Ovary (tissue), 10 donors: ENCODE measurements at regions of chr12 and their contacts with region 1.

Region 1: DNA sequence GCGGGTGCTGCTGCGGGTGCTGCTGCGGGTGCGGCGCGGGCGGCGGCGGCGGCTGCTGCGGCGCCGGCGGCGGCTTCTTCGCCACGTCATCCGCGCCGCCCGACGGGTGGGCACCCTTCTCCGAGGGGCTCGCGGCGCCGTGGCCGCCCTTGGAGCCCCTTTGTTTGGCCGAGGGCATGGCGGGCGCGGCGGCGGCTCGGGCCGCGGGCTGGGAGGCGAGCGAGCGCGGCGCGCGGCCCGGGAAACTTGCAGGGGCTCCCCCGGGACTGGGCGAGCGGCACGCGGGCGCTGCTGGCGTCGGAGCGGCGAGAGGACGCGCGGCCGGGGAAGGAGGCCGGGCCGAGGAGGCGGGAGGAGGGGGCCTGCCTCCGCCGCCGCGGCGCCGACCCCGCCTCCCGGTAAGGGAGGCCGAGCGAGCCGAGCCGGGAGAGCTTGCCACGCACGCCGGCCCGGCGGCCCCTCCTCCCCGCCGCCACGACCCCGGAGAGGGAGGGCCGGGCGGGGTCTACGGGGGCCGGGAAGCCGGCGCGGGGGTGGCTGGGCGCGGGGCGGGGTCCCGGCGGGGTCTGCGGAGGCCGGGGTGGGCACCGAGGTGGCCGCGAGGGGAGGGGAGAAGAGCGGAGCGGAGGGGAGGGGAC is at the start of gene CKAP4:
- DNase-seq: peak; percentile 80 to 88 (median 85)
- H3K4me3 ChIP-seq: peak within 1 kb of the TSS; percentile 73
- H3K27ac ChIP-seq: peak within 1 kb of the TSS; percentile 99 to 100
- H3K4me1 ChIP-seq: peaks cover 16% of the 10 kb centered on the region
- H3K27me3 ChIP-seq: no peaks in the 10 kb centered on the region
- CTCF ChIP-seq: no peak
- EP300 ChIP-seq: no peak
- POLR2A ChIP-seq: peak; percentile 59
- total RNA-seq, gene CKAP4: 32.0 to 59.4 (median 55.4) TPM

Region 2: DNA sequence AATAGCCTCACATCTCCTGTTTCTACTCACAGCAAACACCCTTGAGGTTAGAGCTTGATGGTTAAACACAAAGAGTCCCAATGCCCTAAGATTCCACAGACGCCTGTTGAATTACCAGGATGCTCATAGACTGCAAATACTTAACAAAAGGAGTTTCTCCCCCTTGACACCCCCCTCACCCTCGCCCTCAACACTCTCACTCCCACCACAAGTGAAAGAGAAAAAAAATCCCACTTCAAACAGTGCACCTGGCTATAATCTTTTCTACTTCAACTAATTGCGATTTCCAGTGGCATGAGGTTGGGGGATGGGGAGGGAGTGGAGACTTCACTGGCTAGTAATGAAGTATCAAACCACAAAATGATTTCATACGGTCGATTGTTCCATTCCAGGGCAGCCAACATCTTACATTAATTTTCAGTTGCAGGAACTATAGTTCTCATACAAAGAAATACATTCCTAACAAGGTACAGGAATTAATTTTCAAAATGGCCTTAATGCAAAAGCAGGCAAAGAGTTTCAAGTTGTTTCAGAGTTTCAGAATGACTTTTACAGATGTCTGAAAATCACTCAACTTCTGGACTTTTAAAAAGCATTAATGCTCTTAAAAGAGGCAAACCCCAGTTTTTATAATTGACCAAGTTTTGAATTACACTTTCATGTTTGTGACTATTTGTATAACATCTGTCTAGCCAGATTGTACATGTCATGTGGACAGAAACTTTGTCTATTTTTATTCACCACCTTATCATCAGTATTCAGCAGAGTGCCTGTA is 526.6 kb before region 1 on chr12:
- intact Hi-C with region 1: no loop called
- DNase-seq: no peak
- H3K4me3 ChIP-seq: no peak overlapping the region
- H3K27ac ChIP-seq: no peak overlapping the region
- H3K4me1 ChIP-seq: no peaks in the 10 kb centered on the region
- H3K27me3 ChIP-seq: no peaks in the 10 kb centered on the region
- CTCF ChIP-seq: no peak
- EP300 ChIP-seq: no peak
- POLR2A ChIP-seq: no peak

Region 3: DNA sequence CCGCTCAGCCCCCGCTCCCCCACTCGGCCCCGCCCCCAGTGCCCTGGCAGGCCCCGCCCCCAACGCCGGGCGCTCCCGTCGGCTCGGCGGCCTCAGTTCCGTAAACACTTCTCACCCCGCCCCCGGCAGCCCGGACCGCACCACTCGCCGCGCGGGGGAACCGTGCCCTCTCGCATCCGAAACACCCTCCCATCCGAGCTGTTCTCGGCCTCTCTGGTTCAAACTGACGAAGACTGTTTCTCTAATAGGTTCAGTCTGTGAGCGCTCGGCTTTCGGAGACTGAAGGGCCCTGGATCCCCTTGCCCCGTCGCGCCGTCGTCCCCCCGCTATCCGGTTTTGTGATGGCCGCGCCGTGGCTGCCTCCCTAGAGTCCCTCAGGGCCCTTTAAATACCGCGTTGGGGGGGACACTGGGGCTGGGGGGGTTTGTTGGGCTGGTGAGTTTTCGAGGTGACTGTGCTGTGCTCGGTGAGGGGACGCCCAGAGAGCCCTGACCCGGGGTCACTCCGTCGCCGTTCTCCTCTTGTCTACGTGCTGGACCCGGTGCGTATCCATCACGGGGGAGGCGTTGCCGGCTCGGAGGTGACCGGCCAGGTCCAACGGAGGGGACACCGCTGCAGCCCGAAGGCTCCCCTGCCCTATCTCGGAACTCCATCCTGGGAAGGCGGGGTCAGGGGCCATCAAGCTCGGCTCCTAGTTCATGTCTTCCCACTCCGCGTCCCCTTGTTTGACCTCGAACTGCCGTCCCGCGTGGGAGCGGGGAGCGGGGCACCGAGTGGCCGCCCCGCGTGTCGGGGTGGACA is 54.8 kb after region 1 on chr12 and contains the start of gene TCP11L2:
- intact Hi-C with region 1: loop called in 1 of 4 experiments (anchors 5 kb)
- DNase-seq: peak; percentile 87 to 93 (median 90)
- H3K4me3 ChIP-seq: peak within 1 kb of the TSS; percentile 75
- H3K27ac ChIP-seq: peak within 1 kb of the TSS; percentile 86 to 89
- H3K4me1 ChIP-seq: peaks cover 7% of the 10 kb centered on the region
- H3K27me3 ChIP-seq: no peaks in the 10 kb centered on the region
- CTCF ChIP-seq: peak in 1 of 3 donors; percentile 28
- EP300 ChIP-seq: no peak
- POLR2A ChIP-seq: peak; percentile 55
- total RNA-seq, gene TCP11L2: 8.5 to 41.7 (median 30.3) TPM

Region 4: DNA sequence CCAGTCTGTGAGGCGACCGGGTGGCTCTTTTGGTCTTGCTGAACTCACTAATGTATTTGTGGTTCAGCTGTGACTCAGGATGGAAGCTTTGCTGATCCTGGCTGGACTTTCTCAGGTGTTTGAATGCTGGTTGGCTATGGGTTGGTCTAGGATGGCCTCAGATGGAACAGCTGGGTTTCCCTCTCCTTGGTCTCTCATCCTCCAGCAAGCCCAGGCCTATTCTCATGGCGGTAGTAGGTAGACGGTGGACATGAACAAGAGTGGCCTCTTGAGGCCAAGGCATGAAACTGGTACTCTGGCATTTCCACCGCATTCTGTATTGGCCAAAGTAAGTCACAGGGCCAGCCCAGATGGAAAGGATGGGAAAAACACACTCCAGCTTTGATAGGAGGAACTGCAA is 97.9 kb after region 1 on chr12:
- intact Hi-C with region 1: loop called in 2 of 4 experiments (anchors 5 to 10 kb)
- DNase-seq: no peak
- H3K4me3 ChIP-seq: no peak overlapping the region
- H3K27ac ChIP-seq: no peak overlapping the region
- H3K4me1 ChIP-seq: peaks cover 10% of the 10 kb centered on the region
- H3K27me3 ChIP-seq: no peaks in the 10 kb centered on the region
- CTCF ChIP-seq: no peak
- EP300 ChIP-seq: no peak
- POLR2A ChIP-seq: no peak

Region 5: DNA sequence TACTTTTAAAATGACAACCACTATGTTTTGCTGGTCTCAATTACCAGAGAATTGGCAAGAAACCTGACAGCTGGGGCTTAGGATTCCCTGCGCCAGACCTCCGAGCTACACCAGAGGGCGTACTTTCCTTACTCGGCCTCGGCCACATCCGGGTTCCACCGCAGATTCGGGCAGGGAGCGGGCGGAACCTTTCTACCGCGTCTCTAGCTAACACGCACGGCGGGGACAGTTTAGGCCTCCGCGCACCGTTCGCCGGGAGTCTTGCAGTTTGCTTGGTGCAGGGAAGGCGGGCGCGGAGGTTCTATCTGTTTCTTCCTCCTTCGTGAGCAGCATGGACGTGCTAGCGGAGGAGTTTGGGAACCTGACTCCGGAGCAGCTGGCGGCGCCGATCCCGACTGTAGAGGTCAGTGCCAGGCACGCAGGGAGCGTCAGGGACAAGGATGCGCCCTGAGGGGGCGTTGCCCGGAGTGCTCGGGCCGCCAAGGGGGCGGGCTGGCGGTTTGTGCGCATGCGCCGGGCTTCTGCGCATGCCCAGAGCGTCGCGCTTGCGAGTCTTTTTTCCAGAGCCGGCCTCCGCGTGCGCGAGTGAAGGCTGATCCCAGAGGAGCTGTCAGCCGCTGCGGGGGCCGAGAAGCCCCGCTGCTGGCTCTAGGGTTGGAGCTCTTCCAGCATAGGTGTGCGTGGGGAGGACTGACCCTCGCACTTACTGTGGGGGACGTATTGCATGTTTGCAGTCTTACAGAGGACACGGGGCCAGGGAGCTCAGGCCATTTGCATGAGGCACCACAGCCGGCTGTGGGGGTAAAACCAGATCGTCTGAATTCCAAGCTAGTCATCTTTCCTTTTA is 110.0 kb after region 1 on chr12 and contains the start of gene POLR3B:
- intact Hi-C with region 1: loop called in 1 of 4 experiments (anchors 5 kb)
- DNase-seq: peak; percentile 96 to 97 (median 96)
- H3K4me3 ChIP-seq: peak within 1 kb of the TSS; percentile 69
- H3K27ac ChIP-seq: peak within 1 kb of the TSS; percentile 34 to 90
- H3K4me1 ChIP-seq: peaks cover 4% of the 10 kb centered on the region
- H3K27me3 ChIP-seq: no peaks in the 10 kb centered on the region
- CTCF ChIP-seq: peak; percentile 84 to 86 (median 85)
- EP300 ChIP-seq: no peak
- POLR2A ChIP-seq: peak; percentile 37
- total RNA-seq, gene POLR3B: 5.2 to 15.7 (median 9.7) TPM

Region 6: DNA sequence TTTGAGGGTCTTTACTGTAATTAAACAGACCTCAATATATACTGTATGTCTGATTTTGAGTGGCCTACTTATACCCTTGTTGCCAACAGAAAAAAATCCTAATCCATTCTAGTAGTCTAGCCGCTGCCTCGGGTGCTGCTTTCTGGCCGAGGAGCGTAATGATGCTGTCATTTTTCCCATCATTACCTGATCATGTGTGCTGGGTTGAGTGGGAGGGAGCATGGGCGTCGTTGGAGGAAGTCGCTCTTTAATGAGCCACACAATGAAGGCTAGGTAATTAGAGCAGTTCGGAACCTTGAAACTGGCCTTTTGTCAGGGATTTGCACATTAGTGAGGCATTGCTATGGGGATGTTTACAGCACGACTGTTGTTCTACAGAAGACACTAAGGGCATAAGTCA is 258.9 kb after region 1 on chr12:
- intact Hi-C with region 1: no loop called
- DNase-seq: no peak
- H3K4me3 ChIP-seq: no peak overlapping the region
- H3K27ac ChIP-seq: no peak overlapping the region
- H3K4me1 ChIP-seq: no peaks in the 10 kb centered on the region
- H3K27me3 ChIP-seq: no peaks in the 10 kb centered on the region
- CTCF ChIP-seq: no peak
- EP300 ChIP-seq: no peak
- POLR2A ChIP-seq: no peak